WTC11 (cell line): ENCODE measurements at regions of chr10 and their contacts with region 1.

Region 1: DNA sequence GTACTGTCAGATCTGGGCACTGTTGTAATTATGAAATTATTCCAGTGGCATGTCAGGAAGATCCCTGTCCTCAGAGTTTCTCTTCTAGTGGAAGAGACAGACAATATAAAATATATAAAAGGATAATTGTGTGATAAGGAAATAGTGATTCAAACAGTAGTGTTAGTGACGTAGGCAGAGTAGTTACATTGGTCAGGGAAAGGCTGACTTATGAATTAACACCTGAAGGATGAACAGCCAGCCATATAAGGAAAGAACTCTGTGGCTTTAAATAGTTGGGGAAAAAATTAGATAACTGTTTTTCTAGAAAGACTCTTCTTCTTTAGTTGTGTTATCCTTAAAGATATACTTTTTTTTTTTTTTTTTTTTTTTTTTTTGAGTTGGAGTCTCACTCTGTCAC is 37.7 kb downstream of the WAC start:
- DNase-seq: no peak
- ATAC-seq: no peak
- H3K4me3 Mint-ChIP-seq: no peak overlapping the region
- H3K27ac Mint-ChIP-seq: no peak overlapping the region
- H3K4me1 Mint-ChIP-seq: peaks cover 45% of the 10 kb centered on the region
- H3K27me3 Mint-ChIP-seq: no peaks in the 10 kb centered on the region
- CTCF ChIP-seq: no peak

Region 2: GRCh38 chr10:28442403-28442802 is 128.2 kb before region 1 on chr10:
- CTCF ChIA-PET with region 1: no interaction called
- POLR2A ChIA-PET with region 1: no interaction called
- DNase-seq: no peak
- ATAC-seq: no peak
- H3K4me3 Mint-ChIP-seq: no peak overlapping the region
- H3K27ac Mint-ChIP-seq: no peak overlapping the region
- H3K4me1 Mint-ChIP-seq: peaks cover 7% of the 10 kb centered on the region
- H3K27me3 Mint-ChIP-seq: no peaks in the 10 kb centered on the region
- CTCF ChIP-seq: no peak

Region 3: GRCh38 chr10:28463676-28464395 is 106.8 kb before region 1 on chr10:
- CTCF ChIA-PET with region 1: no interaction called
- POLR2A ChIA-PET with region 1: no interaction called
- DNase-seq: no peak
- ATAC-seq: no peak
- H3K4me3 Mint-ChIP-seq: no peak overlapping the region
- H3K27ac Mint-ChIP-seq: no peak overlapping the region
- H3K4me1 Mint-ChIP-seq: peaks cover 22% of the 10 kb centered on the region
- H3K27me3 Mint-ChIP-seq: no peaks in the 10 kb centered on the region; the same call in 1 of the 2 replicates
- CTCF ChIP-seq: no peak

Region 4: DNA sequence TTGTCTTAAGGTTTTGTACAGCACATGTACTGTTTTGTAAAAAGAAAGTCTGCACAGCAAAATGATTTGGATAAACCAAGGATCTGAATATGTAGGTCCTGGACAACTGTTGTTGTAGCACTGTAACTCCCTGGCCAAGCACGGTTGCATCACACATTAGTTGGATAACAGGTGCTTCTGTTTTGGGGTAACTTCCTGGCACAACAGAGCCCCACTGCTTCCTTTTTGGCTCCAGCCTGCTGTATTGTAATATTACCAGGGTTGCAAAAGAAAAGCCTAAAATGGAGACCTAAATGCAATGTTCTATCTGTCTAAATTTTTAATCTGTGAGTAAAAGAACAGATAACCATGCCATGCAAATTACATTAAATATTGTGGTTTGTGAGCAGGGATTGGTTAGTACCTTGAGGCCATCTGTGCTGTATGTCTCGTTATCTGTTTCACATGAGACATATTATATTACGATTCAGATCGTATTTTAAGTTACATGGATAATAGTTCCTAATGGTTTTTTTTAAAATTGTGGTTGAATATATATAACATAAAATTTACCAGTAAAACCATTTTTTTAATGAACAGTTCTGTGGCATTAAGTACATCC is 65.1 kb before region 1 on chr10:
- CTCF ChIA-PET with region 1: no interaction called
- POLR2A ChIA-PET with region 1: interaction called, 11 read pairs
- DNase-seq: no peak
- ATAC-seq: no peak
- H3K4me3 Mint-ChIP-seq: no peak overlapping the region
- H3K27ac Mint-ChIP-seq: no peak overlapping the region
- H3K4me1 Mint-ChIP-seq: peaks cover 13% of the 10 kb centered on the region
- H3K27me3 Mint-ChIP-seq: no peaks in the 10 kb centered on the region
- CTCF ChIP-seq: no peak

Region 5: GRCh38 chr10:28592930-28593329 is 22.3 kb after region 1 on chr10:
- CTCF ChIA-PET with region 1: no interaction called
- POLR2A ChIA-PET with region 1: no interaction called
- DNase-seq: no peak
- ATAC-seq: no peak
- H3K4me3 Mint-ChIP-seq: no peak overlapping the region
- H3K27ac Mint-ChIP-seq: peak overlapping the region; percentile 9; the same call in 1 of the 2 replicates
- H3K4me1 Mint-ChIP-seq: peaks cover 40% of the 10 kb centered on the region
- H3K27me3 Mint-ChIP-seq: no peaks in the 10 kb centered on the region
- CTCF ChIP-seq: no peak